Calu3 (cell line): ENCODE measurements at regions of chr3 and their contacts with region 1.

Region 1: GRCh38 chr3:160577556-160578195 is 12.3 kb upstream of the KPNA4 start:
- DNase-seq: peak; percentile 53
- H3K4me3 Mint-ChIP-seq: no peak overlapping the region
- H3K27ac Mint-ChIP-seq: no peak overlapping the region
- H3K4me1 Mint-ChIP-seq: peaks cover 10% of the 10 kb centered on the region
- H3K27me3 Mint-ChIP-seq: no peaks in the 10 kb centered on the region
- CTCF ChIP-seq: peak; percentile 38

Region 2: DNA sequence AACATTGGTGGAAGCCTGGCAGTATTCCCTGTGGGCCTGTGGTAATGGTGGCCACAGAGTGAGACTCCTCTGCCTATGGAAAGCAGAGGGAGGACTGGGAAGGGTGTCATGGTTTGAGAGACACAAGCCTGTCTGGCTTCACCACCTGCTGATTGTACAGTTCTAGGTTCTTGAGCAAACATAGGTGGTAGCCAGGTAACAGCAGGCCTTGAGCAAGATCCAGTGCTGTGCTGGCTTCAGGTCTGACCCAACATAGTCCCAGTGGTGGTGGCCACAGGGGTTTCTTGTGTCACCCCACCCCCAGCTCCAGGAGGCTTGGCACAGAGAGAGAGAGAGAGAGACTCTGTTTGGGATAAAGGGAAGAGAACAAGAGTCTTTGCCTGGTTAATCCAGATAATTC is 10.3 kb after region 1 on chr3:
- CTCF ChIA-PET with region 1: no interaction called
- intact Hi-C with region 1: no loop called
- DNase-seq: no peak
- H3K4me3 Mint-ChIP-seq: no peak overlapping the region
- H3K27ac Mint-ChIP-seq: no peak overlapping the region
- H3K4me1 Mint-ChIP-seq: no peaks in the 10 kb centered on the region
- H3K27me3 Mint-ChIP-seq: no peaks in the 10 kb centered on the region
- CTCF ChIP-seq: no peak

Region 3: DNA sequence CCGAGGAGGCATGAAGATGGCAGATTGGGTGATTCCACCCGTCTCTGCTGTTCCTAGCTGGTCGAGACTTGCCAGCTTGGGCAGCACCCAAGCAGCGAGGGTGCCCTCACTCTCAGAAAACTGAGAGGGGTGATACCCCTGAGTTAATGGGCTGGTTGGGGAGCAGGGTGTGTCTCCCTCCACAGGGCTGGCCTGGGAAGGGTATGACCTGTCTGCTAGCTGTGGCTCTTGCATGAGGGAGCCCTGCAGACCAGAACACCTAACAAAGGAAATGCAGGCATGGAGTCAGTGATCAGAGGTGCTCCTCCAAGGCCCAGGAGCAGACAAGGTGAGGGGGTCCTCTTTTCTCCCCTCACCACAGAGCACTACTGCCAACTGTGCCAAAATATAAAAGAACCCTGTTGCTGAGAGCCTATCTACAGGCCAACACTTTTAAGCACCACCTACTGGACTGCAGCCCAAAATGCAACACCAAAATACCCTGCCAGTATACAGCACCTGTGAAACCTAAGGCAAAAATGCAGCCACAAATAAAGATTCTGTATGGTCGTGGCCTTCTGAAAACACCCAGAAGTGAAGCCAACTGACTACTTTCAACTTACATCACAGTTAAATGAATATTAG is 142.6 kb after region 1 on chr3:
- CTCF ChIA-PET with region 1: no interaction called
- intact Hi-C with region 1: loop called (anchors 1 kb)
- DNase-seq: peak; percentile 44
- H3K4me3 Mint-ChIP-seq: no peak overlapping the region
- H3K27ac Mint-ChIP-seq: no peak overlapping the region
- H3K4me1 Mint-ChIP-seq: no peaks in the 10 kb centered on the region
- H3K27me3 Mint-ChIP-seq: no peaks in the 10 kb centered on the region
- CTCF ChIP-seq: peak; percentile 60

Region 4: GRCh38 chr3:161310649-161311423 is 733.2 kb after region 1 on chr3:
- CTCF ChIA-PET with region 1: no interaction called
- intact Hi-C with region 1: no loop called
- DNase-seq: no peak
- H3K4me3 Mint-ChIP-seq: no peak overlapping the region
- H3K27ac Mint-ChIP-seq: no peak overlapping the region
- H3K4me1 Mint-ChIP-seq: peaks cover 15% of the 10 kb centered on the region
- H3K27me3 Mint-ChIP-seq: no peaks in the 10 kb centered on the region
- CTCF ChIP-seq: no peak